K562 (cell line): ENCODE measurements at regions of chr5 and their contacts with region 1.

Region 1: DNA sequence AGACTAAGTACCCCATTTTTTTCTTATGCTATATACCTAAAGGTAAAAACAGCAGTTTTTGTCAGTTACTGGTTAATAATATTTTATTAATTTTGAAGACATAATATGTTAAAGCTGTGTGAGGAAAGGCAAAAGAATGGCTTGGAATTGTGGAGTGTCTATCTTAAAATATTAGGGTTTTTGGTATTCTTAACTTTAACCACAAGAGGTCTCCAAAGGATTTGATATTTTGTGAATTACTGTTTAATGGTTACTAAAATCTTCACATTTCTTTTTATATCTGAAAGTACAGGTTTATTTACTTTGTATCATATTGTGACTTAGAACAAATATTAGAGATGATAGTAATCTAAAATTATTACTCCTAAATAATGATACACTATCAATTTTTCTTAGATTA is 32.0 kb upstream of the DHFR start:
- DNase-seq: no peak
- ATAC-seq: 0 out of 3 replicates have a peak, but pooled peaks have one; percentile 42
- H3K4me3 ChIP-seq: no peak overlapping the region
- H3K27ac ChIP-seq: no peak overlapping the region
- H3K4me1 ChIP-seq: no peaks in the 10 kb centered on the region
- H3K27me3 ChIP-seq: no peaks in the 10 kb centered on the region
- CTCF ChIP-seq: peak in 2 of 3 experiments; percentile 18 to 51; a peak in 3 of 6 replicates
- EP300 ChIP-seq: no peak
- POLR2A ChIP-seq: no peak
- RAD21 ChIP-seq: peak; percentile 54 to 62

Region 2: DNA sequence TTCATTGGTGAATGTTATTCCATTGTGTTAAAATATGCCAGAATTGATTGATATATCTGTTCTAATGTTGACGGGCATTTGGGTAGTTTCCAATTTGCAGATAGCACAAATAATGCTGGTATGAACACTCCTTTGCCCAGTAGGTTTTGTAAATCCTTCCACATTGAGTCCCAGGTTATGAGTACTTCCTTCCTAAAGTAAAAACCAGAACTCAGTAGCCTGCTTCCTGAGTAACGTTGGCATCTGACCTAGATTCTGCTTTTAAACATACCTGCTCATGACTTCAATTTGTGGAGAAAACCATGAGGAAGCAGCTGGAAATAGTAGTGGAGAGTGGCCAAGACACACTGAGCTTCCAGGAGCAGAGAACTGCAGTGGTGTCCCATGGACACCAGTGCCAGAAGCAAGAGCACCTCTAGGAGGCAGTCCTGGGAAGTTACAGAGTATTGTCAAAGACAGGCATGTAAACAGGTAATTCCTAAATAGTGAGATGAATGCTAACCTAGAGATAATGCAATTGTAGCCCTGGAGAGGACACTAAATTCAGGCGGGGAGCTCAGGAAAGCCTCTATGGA is 249.1 kb after region 1 on chr5:
- CTCF ChIA-PET with region 1: no interaction called
- POLR2A ChIA-PET with region 1: no interaction called
- in situ Hi-C with region 1: no loop called
- intact Hi-C with region 1: loop called (anchors 10 kb)
- DNase-seq: peak in 2 of 4 experiments; percentile 4 to 12
- ATAC-seq: peak; percentile 56; the same call in 2 of the 3 replicates
- H3K4me3 ChIP-seq: no peak overlapping the region
- H3K27ac ChIP-seq: no peak overlapping the region
- H3K4me1 ChIP-seq: no peaks in the 10 kb centered on the region
- H3K27me3 ChIP-seq: peaks cover 7 to 18% of the 10 kb centered on the region in 2 experiments; a peak in 3 of 5 replicates
- CTCF ChIP-seq: peak; percentile 23 to 40 (median 40); a peak in 4 of 6 replicates
- EP300 ChIP-seq: no peak
- POLR2A ChIP-seq: no peak
- RAD21 ChIP-seq: peak in 1 of 2 experiments; percentile 57; a peak in 2 of 4 replicates

Region 3: GRCh38 chr5:81105261-81105877 is 418.6 kb after region 1 on chr5:
- CTCF ChIA-PET with region 1: interaction called, 9 read pairs
- POLR2A ChIA-PET with region 1: no interaction called
- in situ Hi-C with region 1: no loop called
- intact Hi-C with region 1: loop called (anchors 1 kb)
- DNase-seq: no peak
- ATAC-seq: no peak
- H3K4me3 ChIP-seq: no peak overlapping the region
- H3K27ac ChIP-seq: no peak overlapping the region
- H3K4me1 ChIP-seq: no peaks in the 10 kb centered on the region
- H3K27me3 ChIP-seq: peaks cover 3 to 7% of the 10 kb centered on the region in 2 experiments; a peak in 3 of 5 replicates
- CTCF ChIP-seq: no peak
- EP300 ChIP-seq: no peak
- POLR2A ChIP-seq: no peak
- RAD21 ChIP-seq: no peak

Region 4: DNA sequence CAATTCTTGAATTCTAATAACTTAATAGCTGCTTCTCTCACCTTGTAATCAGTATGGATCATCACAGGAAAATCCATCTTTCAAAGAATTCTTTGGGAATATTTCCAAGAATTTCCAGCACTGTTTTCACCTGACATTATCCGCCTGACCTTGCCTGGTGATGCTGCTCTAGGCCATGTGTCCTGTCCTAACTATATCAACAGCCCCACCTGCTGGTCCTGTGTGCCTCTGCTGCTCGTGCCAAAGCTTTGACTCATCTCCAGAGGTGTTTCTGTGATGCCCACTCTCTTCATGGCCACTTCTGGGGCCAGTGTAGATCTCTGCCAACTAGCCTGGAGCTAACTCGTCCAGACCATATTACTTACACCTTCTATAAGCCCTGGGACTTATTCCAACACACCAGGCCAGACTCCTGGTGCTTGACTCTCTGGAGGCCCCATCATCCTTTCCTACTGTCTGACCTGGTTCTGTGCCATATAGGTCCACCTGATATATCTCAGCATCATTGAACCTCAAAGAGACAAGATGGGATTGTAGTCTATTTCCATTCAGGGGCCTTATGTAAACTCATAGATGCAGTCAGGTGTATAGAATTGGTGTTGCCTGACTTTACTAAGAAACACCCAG is 478.8 kb after region 1 on chr5:
- CTCF ChIA-PET with region 1: no interaction called
- POLR2A ChIA-PET with region 1: no interaction called
- in situ Hi-C with region 1: no loop called
- intact Hi-C with region 1: loop called (anchors 1 kb)
- DNase-seq: peak; percentile 52 to 68 (median 61)
- ATAC-seq: peak; percentile 97
- H3K4me3 ChIP-seq: no peak overlapping the region
- H3K27ac ChIP-seq: no peak overlapping the region
- H3K4me1 ChIP-seq: no peaks in the 10 kb centered on the region
- H3K27me3 ChIP-seq: peaks cover 9 to 26% of the 10 kb centered on the region in 2 experiments; a peak in 4 of 5 replicates
- CTCF ChIP-seq: peak; percentile 74 to 78 (median 74)
- EP300 ChIP-seq: no peak
- POLR2A ChIP-seq: no peak
- RAD21 ChIP-seq: peak; percentile 45 to 77; a peak in 3 of 4 replicates

Region 5: GRCh38 chr5:81194633-81195333 is 508.0 kb after region 1 on chr5:
- CTCF ChIA-PET with region 1: interaction called, 3 read pairs
- POLR2A ChIA-PET with region 1: no interaction called
- in situ Hi-C with region 1: loop called (anchors 10 kb)
- intact Hi-C with region 1: loop called (anchors 5 kb)
- DNase-seq: peak; percentile 87 to 88 (median 88)
- ATAC-seq: peak; percentile 100
- H3K4me3 ChIP-seq: no peak overlapping the region
- H3K27ac ChIP-seq: no peak overlapping the region
- H3K4me1 ChIP-seq: peaks cover 4% of the 10 kb centered on the region in 2 experiments; a peak in 4 of 5 replicates
- H3K27me3 ChIP-seq: peaks cover 18 to 42% of the 10 kb centered on the region in 2 experiments
- CTCF ChIP-seq: peak; percentile 93 to 95 (median 93)
- EP300 ChIP-seq: no peak
- POLR2A ChIP-seq: no peak
- RAD21 ChIP-seq: peak; percentile 92